ENCODE measurements at regions of chr10 and their contacts with region 1.

Region 1: GRCh38 chr10:28676968-28677887 is at the start of gene BAMBI:
- DNase-seq: peak; percentile 95
- ATAC-seq: peak; percentile 99
- H3K4me3 Mint-ChIP-seq: peak within 1 kb of the TSS; percentile 68
- H3K27ac Mint-ChIP-seq: no peak within 1 kb of the TSS
- H3K4me1 Mint-ChIP-seq: peaks cover 31% of the 10 kb centered on the region
- H3K27me3 Mint-ChIP-seq: peaks cover 50% of the 10 kb centered on the region
- total RNA-seq, gene BAMBI: 0.09 to 0.16 TPM

Region 2: GRCh38 chr10:27241652-27242472 is 1435.4 kb before region 1 on chr10:
- CTCF ChIA-PET with region 1: no interaction called
- POLR2A ChIA-PET with region 1: no interaction called
- intact Hi-C with region 1: loop called in 1 of 2 experiments (anchors 5 kb)
- DNase-seq: peak; percentile 94
- ATAC-seq: peak; percentile 71
- H3K4me3 Mint-ChIP-seq: peak overlapping the region; percentile 98
- H3K27ac Mint-ChIP-seq: peak overlapping the region; percentile 100
- H3K4me1 Mint-ChIP-seq: peaks cover 28% of the 10 kb centered on the region
- H3K27me3 Mint-ChIP-seq: no peaks in the 10 kb centered on the region

Region 3: GRCh38 chr10:28628184-28628893 is 48.9 kb before region 1 on chr10:
- CTCF ChIA-PET with region 1: no interaction called
- POLR2A ChIA-PET with region 1: no interaction called
- intact Hi-C with region 1: loop called in 1 of 2 experiments (anchors 5 kb)
- DNase-seq: peak; percentile 86
- ATAC-seq: peak; percentile 87
- H3K4me3 Mint-ChIP-seq: no peak overlapping the region
- H3K27ac Mint-ChIP-seq: no peak overlapping the region
- H3K4me1 Mint-ChIP-seq: peaks cover 5% of the 10 kb centered on the region
- H3K27me3 Mint-ChIP-seq: peaks cover 12% of the 10 kb centered on the region

Region 4: DNA sequence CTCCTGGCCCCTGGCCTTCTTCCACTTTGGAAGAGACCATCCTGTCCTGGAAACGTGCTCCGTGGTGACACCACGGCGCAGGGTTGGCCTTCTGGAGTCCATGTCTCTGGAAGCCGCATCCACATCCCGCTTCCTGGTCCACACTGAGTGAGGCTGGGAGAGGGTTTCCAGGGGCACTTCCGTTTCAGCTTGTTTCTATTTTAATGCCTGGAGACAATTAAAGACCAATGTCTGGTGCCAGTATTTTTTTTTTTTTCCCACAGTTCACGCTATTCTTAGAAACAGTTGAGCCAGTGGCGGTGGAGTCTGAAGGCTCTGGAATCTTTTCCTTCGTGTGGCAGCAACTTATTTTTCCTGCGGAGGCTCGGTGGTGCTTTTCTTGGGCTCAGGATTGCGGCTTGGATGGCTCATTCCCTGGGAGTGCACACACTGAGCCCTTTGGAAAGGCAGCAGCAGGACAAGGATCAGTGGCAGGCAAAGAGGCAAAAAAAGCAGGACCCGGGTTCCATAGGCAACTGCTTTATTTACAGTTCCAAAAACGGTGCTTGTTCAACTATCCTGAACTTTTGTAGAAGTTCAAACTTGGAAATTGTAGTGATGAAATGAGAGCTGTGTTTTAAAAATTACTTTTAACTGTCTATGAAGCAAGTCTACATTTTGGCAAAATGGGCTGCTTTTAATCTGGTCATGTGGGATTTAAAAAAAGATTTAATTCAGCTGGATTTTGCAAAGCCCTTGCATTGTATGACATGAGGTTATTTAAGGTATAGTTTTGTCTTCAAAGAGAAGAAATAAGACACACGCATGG is 202.9 kb after region 1 on chr10:
- CTCF ChIA-PET with region 1: no interaction called
- POLR2A ChIA-PET with region 1: no interaction called
- intact Hi-C with region 1: loop called in 1 of 2 experiments (anchors 5 kb)
- DNase-seq: no peak
- ATAC-seq: no peak
- H3K4me3 Mint-ChIP-seq: no peak overlapping the region
- H3K27ac Mint-ChIP-seq: no peak overlapping the region
- H3K4me1 Mint-ChIP-seq: no peaks in the 10 kb centered on the region
- H3K27me3 Mint-ChIP-seq: peaks cover 15% of the 10 kb centered on the region

Region 5: DNA sequence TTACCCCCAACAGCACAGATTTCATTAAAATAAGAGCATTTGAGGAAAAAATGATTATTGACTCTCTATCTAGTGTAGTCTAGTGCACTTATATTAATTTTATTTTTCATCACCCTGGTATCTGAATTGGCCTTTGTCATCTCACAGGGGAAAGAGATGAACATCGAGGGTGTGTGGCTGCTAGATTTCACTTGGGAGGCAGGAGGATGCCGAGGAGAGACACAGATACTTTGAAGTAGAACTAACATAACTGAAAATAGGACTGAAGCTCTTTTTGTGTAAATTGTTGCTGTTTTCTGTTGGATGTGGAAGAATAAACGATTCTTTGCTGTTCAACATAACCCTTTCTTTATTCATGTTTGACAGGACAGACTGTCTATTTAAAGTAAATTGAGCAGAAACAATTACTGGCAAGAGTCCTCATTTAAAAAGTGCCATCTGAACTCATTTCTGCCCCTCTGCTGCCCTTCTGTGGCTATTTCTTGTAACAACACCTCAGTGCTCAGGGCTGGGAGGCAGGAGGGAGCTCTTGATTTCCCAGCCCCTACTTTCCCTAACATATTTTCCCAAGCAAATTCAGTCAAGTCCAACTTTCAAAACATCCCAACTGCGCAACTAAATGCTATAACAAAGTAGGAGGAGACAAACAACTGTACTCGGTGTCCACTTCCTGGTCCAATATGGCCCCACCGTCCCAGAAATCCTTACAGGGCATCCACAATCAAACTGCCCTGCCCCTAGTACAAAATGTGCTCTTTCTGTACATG is 627.2 kb after region 1 on chr10:
- CTCF ChIA-PET with region 1: interaction called, 8 read pairs
- POLR2A ChIA-PET with region 1: no interaction called
- intact Hi-C with region 1: loop called in 1 of 2 experiments (anchors 2 kb)
- DNase-seq: peak; percentile 49
- ATAC-seq: no peak
- H3K4me3 Mint-ChIP-seq: no peak overlapping the region
- H3K27ac Mint-ChIP-seq: no peak overlapping the region
- H3K4me1 Mint-ChIP-seq: peaks cover 5% of the 10 kb centered on the region
- H3K27me3 Mint-ChIP-seq: peaks cover 28% of the 10 kb centered on the region

Measured in activated CD4-positive, alpha-beta T cell treated with anti-CD3 and anti-CD28 coated beads for 36 hours (primary cell).